ENCODE measurements at regions of chr12 and their contacts with region 1.

Region 1: DNA sequence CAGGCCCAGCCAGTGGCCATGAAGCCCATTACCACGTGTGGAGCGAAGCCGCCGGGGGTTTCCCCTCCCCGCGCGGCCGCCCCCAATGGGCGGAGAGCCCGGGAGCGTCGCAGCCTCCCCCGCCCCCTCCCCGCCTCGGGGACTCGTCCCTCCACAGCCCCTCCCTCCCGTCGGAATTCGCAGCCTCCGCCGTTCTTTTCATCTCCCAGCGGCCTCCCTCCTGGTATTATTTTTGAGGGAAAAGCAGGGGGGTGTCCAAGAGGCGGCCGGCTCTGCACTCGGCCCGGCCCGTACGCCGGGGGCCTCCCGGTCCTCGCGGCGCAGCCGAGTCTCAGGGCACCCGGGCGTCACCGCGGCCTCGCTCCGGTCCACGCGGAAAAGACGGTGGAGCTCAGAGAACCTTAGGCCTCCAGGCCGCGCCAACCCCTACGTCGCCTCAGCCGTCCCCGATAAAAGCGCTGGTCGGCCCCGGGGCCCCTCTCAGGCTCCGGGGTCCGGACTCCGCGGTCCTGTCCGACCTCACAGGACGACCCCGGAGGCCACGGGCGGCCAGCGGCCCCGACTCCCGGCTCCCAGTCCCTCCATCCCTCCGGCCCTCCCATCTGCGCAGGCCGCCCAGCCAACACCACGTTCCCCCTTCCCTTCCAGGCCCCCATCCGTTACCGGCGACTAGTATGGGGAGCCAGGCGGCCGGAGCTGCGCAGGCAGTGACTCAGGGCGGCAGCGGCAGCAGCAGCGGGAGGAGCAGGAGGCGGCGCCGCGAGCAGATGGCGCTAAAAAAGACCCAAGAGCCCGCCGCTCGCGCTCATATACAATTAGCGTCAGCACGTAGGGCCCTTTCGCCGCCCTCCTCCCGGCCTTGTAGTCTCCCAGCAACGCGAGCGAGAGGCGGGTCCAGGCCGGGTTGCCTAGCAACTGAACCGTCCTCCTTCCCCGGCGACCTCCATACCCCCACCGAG is at the start of gene NAP1L1:
- DNase-seq: peak; percentile 98
- H3K4me3 Mint-ChIP-seq: peak within 1 kb of the TSS; percentile 93
- H3K27ac Mint-ChIP-seq: peak within 1 kb of the TSS; percentile 99
- H3K4me1 Mint-ChIP-seq: peaks cover 42% of the 10 kb centered on the region
- H3K27me3 Mint-ChIP-seq: no peaks in the 10 kb centered on the region
- total RNA-seq, gene NAP1L1: 889 to 895 TPM

Region 2: DNA sequence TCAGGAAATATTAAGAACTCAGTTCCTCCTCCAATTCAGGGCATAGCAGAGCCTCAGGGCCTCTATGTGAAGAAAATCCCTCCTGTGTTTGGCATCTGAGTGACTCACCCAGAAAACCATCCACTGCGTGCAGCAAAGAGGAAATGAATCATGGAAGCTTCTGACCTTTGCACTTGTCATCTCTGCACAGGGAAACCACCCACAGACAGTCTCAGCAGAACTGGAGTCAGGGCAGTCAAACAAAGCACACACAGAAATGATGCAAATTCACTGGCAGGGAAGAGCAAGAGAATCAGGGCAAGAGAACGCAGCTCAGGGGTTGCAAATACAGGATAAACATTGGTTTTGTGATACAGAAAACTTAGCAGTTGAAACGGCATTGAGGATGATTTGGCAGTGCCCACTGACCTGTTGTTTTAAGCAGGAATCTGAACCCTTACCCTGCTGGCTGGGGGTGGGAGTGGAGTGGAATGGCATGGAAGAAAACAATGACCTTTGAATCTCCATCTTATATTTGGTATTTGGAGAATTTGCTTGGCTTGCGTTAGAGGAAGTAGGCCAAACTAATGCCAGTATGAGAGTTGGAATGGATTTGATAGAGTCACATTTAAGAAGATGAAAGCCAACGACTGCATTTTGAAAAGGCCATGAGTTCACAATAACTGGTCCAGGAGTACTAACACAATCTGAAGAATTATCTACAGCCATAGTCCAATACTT is 106.1 kb before region 1 on chr12:
- CTCF ChIA-PET with region 1: no interaction called
- POLR2A ChIA-PET with region 1: no interaction called
- intact Hi-C with region 1: loop called (anchors 2 kb)
- DNase-seq: peak; percentile 88
- H3K4me3 Mint-ChIP-seq: peak overlapping the region; percentile 34
- H3K27ac Mint-ChIP-seq: peak overlapping the region; percentile 97
- H3K4me1 Mint-ChIP-seq: peaks cover 63% of the 10 kb centered on the region
- H3K27me3 Mint-ChIP-seq: no peaks in the 10 kb centered on the region

Region 3: DNA sequence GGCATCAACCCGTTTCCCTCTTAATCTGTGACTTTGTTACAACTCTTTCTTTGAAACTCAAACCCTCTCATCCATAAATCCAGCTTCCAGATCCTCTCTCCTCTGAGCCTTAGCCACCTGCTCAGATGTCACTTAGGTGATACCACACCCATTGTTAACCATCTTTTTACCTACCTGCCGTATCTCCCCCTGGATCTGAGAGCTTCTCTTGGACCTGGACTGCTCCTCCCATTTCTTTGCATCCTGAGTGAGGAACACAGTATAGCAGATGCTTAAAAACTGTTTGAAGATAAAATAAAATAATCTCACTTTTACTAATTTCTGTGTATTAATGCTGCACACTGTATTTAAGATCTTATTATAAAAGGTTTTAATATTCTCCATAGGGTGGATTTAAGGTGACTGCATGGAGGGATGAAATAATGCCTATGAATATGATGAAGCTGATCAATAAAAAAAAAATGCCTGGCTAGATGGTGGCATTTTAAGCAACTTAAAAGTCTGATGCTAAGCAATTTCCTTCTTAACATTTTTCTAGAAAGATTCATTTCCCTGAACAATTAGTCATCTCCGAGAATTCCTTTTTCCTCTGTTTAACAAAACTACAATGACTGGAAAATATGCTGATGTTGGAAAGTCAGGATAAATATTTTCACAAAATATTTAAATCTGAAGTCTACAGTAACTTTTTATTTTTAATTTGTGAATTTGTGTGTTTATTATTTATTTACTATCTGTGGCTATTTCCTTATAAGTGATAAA is 39.4 kb after region 1 on chr12:
- CTCF ChIA-PET with region 1: no interaction called
- POLR2A ChIA-PET with region 1: no interaction called
- intact Hi-C with region 1: no loop called
- DNase-seq: no peak
- H3K4me3 Mint-ChIP-seq: no peak overlapping the region
- H3K27ac Mint-ChIP-seq: no peak overlapping the region
- H3K4me1 Mint-ChIP-seq: no peaks in the 10 kb centered on the region
- H3K27me3 Mint-ChIP-seq: peaks cover 3% of the 10 kb centered on the region

Region 4: DNA sequence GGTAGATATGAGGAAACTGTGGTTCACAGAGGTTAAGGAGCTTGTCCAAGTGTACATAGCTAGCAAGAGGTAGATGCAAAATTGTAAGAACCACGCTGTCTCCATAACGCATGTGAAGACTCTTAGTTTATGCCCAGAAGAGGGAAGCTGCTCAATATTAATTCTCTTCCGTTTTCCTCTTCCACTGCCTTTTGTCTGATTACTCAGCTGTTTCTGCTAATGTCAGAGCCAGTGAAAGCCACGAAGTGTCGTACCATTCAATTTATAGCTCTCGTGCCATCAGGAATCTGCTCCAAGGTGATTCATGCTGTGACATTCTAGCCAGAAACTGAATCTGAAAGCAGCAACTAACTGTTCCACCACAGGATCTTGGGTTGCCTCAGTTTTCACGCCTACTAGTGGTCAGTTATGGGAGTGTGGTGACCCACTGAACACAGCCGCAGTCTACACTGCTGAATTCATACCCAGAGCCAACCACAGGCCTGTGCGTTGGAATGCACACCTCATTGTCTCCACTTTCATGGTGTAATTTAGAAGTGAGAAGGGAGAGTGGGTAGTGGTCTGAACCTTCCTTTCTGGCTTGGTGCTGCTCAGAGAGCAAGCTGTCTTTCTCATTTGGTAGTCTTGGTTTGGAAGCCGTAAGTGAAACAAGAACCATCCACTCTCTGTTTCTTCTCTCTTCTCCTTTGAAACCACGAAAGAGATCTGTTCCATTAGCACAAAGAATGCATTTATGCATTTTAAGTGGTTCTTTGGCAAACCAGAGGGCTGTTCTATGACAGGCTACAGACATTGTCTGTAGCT is 74.5 kb after region 1 on chr12:
- CTCF ChIA-PET with region 1: no interaction called
- POLR2A ChIA-PET with region 1: no interaction called
- intact Hi-C with region 1: loop called (anchors 1 kb)
- DNase-seq: peak; percentile 91
- H3K4me3 Mint-ChIP-seq: peak overlapping the region; percentile 16
- H3K27ac Mint-ChIP-seq: peak overlapping the region; percentile 25
- H3K4me1 Mint-ChIP-seq: peaks cover 16% of the 10 kb centered on the region
- H3K27me3 Mint-ChIP-seq: peaks cover 12% of the 10 kb centered on the region

Region 5: DNA sequence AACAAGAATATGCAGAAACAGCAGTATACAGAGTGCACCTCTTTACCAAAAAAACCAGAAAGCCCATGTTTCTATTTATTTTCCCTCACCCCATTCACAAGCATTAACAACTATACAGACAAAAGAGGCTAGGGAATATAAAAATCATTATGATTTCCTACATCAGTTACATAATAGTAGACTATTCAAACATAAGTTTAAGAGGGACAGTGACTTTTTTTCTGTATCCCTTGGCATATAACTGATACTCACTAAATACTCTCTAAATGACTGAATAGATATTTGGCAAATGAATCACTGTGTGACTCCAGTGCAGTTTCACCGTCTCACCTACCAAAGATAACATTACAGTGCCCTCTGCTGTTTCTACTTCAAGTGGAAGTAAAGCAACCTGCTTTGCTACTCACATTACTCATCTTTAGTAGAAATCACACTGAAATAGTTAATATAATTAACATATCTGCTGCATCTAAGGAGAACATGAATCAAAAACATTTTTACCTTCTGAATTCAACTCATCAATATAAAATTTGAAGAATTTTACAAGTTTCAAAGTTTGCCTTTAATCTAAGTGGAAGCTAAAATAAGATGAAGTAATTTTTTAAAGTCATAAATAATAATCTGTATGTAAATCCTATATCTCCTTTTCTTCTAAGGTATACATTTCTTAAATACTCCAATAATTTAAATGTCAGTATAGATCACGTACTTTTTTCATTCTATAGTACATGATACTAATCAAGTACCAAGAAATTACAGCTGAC is 371.6 kb after region 1 on chr12:
- CTCF ChIA-PET with region 1: interaction called, 3 read pairs
- POLR2A ChIA-PET with region 1: no interaction called
- intact Hi-C with region 1: loop called (anchors 1 kb)
- DNase-seq: peak; percentile 24
- H3K4me3 Mint-ChIP-seq: no peak overlapping the region
- H3K27ac Mint-ChIP-seq: no peak overlapping the region
- H3K4me1 Mint-ChIP-seq: peaks cover 20% of the 10 kb centered on the region
- H3K27me3 Mint-ChIP-seq: no peaks in the 10 kb centered on the region

Region 6: GRCh38 chr12:76586764-76587395 is 502.7 kb after region 1 on chr12:
- CTCF ChIA-PET with region 1: no interaction called
- POLR2A ChIA-PET with region 1: no interaction called
- intact Hi-C with region 1: loop called (anchors 10 kb)
- DNase-seq: peak; percentile 18
- H3K4me3 Mint-ChIP-seq: no peak overlapping the region
- H3K27ac Mint-ChIP-seq: no peak overlapping the region
- H3K4me1 Mint-ChIP-seq: peaks cover 1% of the 10 kb centered on the region
- H3K27me3 Mint-ChIP-seq: no peaks in the 10 kb centered on the region

Measured in activated CD4-positive, alpha-beta memory T cell treated with anti-CD3 and anti-CD28 coated beads for 36 hours (primary cell).